ENCODE measurements at regions of chr10 and their contacts with region 1.

Region 1: GRCh38 chr10:60099998-60100747 is 193.8 kb upstream of the CCDC6 start:
- DNase-seq: peak; percentile 78
- H3K4me3 ChIP-seq: no peak overlapping the region
- H3K27ac ChIP-seq: no peak overlapping the region
- H3K4me1 ChIP-seq: no peaks in the 10 kb centered on the region
- H3K27me3 ChIP-seq: no peaks in the 10 kb centered on the region
- CTCF ChIP-seq: peak; percentile 74

Region 2: DNA sequence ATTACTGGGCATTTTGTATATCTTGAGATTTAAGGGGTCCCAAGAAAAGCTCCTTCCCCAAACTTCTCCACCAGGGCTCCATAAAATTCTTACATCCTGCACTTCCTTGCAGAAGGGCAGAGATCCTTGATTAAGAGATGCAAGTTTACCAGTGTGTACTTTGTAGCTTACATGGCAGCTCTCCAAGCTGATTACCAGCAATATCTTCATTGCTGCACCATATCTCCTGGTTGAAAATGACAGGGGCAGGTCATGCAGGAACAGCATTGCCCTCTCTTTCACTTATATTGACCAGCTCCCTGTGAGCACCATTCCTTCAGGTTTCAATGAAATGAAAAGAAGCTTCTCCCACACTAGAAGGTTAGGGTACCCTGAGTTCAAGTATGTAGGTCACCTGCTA is 1108.3 kb before region 1 on chr10:
- CTCF ChIA-PET with region 1: interaction called, 11 read pairs
- POLR2A ChIA-PET with region 1: no interaction called
- intact Hi-C with region 1: no loop called
- DNase-seq: no peak
- H3K4me3 ChIP-seq: no peak overlapping the region
- H3K27ac ChIP-seq: no peak overlapping the region
- H3K4me1 ChIP-seq: no peaks in the 10 kb centered on the region
- H3K27me3 ChIP-seq: no peaks in the 10 kb centered on the region
- CTCF ChIP-seq: no peak

Region 3: GRCh38 chr10:60208676-60209269 is 108.6 kb after region 1 on chr10:
- CTCF ChIA-PET with region 1: interaction called, 3 read pairs
- POLR2A ChIA-PET with region 1: no interaction called
- intact Hi-C with region 1: loop called (anchors 5 kb)
- DNase-seq: peak; percentile 60
- H3K4me3 ChIP-seq: no peak overlapping the region
- H3K27ac ChIP-seq: no peak overlapping the region
- H3K4me1 ChIP-seq: no peaks in the 10 kb centered on the region
- H3K27me3 ChIP-seq: no peaks in the 10 kb centered on the region
- CTCF ChIP-seq: peak; percentile 80

Region 4: DNA sequence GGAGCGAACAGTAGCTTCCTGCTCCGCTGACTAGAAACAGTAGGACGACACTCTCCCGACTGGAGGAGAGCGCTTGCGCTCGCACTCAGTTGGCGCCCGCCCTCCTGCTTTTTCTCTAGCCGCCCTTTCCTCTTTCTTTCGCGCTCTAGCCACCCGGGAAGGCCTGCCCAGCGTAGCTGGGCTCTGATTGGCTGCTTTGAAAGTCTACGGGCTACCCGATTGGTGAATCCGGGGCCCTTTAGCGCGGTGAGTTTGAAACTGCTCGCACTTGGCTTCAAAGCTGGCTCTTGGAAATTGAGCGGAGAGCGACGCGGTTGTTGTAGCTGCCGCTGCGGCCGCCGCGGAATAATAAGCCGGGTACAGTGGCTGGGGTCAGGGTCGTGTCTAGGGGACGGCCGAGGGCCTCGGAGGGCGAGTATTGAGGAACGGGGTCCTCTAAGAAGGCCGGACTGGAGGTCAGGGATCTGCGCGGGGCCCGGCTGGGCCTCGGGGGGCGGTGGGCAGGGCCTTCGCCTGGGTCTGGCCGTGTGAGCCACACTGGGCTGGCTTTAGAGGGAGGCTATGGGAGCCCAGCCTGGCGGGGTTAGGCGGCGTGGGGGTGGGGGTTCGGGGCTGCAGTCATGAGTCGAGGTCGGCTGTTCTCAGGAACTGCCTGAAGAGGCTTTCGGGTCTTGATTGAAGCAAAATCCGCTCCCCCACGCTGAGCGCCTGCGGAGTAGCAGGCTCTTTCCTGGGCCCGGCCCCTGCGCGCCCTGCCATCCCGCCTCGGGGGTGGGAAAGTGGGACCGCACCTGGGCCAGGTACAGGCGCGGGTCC is 678.2 kb after region 1 on chr10 and contains the start of gene CDK1:
- CTCF ChIA-PET with region 1: no interaction called
- POLR2A ChIA-PET with region 1: no interaction called
- intact Hi-C with region 1: loop called (anchors 10 kb)
- DNase-seq: peak; percentile 100
- H3K4me3 ChIP-seq: peak within 1 kb of the TSS; percentile 86
- H3K27ac ChIP-seq: peak within 1 kb of the TSS; percentile 94
- H3K4me1 ChIP-seq: peaks cover 24% of the 10 kb centered on the region
- H3K27me3 ChIP-seq: no peaks in the 10 kb centered on the region
- CTCF ChIP-seq: no peak
- total RNA-seq, gene CDK1: 153 and 168 TPM in 2 replicates

Measured in A673 (cell line).